Breast epithelium (tissue), 4 donors: ENCODE measurements at regions of chr13 and their contacts with region 1.

Region 1: DNA sequence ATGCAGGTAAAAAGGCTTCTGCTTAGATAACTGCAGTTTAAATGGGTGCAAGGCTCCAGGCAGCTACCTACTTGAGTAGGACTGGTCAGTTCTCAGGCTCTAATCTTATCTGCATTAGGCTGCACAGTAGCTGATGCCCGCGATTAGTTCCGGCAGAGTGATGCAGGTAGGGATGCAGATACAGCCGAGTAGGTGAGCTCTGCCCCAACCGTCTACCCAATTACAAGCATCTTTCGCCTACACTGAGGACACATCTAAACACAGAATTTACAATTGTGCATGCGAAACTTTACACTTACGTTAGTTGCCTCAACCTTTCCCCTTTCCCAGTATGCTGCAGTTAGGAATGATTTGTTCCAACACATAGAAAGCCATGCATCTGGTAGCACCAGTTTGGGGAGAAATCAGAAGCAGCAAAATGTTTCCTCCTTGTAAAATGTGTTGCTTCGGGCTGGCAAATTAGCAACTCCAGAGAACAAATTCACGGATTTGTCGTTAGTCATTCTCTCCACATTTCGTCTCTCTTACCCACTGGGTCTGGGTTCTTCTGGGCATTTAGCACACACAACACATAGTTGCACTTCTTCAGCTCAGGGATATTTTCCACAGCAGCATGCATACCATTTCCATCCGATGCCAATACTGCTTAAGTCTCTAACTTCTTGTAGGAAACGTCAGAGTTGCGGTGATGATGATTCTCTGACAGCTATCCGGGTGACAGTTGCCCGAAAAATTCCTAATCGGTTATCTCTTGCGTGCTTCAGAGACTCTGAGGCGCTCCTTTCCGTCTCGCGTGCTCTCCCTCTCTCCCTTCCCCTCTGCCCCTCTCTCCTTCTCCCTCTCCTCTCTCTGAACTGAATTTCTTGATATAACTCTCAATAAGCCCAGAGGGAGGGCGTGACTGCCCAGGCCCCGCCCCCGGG is at the start of gene PCDH9:
- DNase-seq: no peak
- H3K4me3 ChIP-seq: peak within 1 kb of the TSS; percentile 69 to 80 (median 79)
- H3K27ac ChIP-seq: peak within 1 kb of the TSS; percentile 45 to 57
- H3K4me1 ChIP-seq: no peaks in the 10 kb centered on the region
- H3K27me3 ChIP-seq: no peaks in the 10 kb centered on the region
- CTCF ChIP-seq: no peak
- POLR2A ChIP-seq: no peak
- total RNA-seq, gene PCDH9: 0.98 to 26.7 (median 3.7) TPM

Region 2: DNA sequence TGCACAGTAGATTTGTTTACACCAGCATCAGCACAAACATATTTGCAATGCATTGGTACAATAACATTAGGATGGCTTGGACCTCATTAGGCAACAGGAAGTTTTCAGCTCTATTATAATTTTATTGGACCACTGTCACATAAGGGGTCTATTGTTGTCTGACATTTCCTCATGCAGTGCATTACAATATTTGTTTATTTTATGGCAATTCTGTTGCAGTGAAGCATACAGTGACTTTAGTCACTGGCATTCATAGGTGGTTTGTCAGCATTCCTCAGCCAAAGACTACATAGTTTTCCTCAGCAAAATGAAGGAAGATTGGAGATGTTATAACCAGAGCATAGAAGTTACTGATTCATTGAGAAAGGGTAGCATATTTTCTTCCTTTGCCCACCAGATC is 1732.5 kb before region 1 on chr13:
- intact Hi-C with region 1: no loop called
- DNase-seq: no peak
- H3K4me3 ChIP-seq: no peak overlapping the region
- H3K27ac ChIP-seq: no peak overlapping the region
- H3K4me1 ChIP-seq: no peaks in the 10 kb centered on the region
- H3K27me3 ChIP-seq: no peaks in the 10 kb centered on the region
- CTCF ChIP-seq: no peak
- POLR2A ChIP-seq: no peak

Region 3: DNA sequence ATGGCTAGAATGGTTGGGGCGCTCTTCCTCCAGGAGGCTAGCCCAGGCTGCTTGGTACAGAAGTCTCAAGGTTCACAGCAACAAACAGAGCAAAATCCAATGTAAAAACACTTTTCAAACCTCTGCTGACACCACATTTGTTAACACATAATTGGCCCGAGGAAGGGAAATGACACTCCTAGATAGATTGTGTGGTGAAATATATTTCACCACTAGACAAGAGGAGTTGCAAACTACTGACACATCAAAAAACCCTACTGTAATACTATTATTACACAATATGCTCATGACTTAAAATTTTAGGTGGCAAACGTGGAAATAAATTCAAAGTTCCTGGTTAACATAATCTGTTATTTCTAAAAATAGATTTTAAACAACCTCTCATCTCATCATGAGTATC is 643.3 kb before region 1 on chr13:
- intact Hi-C with region 1: loop called (anchors 5 kb)
- DNase-seq: no peak
- H3K4me3 ChIP-seq: no peak overlapping the region
- H3K27ac ChIP-seq: no peak overlapping the region
- H3K4me1 ChIP-seq: no peaks in the 10 kb centered on the region
- H3K27me3 ChIP-seq: no peaks in the 10 kb centered on the region
- CTCF ChIP-seq: no peak
- POLR2A ChIP-seq: no peak

Region 4: GRCh38 chr13:67318398-67318797 is 88.7 kb after region 1 on chr13:
- intact Hi-C with region 1: no loop called
- DNase-seq: no peak
- H3K4me3 ChIP-seq: no peak overlapping the region
- H3K27ac ChIP-seq: no peak overlapping the region
- H3K4me1 ChIP-seq: no peaks in the 10 kb centered on the region
- H3K27me3 ChIP-seq: no peaks in the 10 kb centered on the region
- CTCF ChIP-seq: no peak
- POLR2A ChIP-seq: no peak